CD14-positive monocyte (primary cell): ENCODE measurements at regions of chr2 and their contacts with region 1.

Region 1: DNA sequence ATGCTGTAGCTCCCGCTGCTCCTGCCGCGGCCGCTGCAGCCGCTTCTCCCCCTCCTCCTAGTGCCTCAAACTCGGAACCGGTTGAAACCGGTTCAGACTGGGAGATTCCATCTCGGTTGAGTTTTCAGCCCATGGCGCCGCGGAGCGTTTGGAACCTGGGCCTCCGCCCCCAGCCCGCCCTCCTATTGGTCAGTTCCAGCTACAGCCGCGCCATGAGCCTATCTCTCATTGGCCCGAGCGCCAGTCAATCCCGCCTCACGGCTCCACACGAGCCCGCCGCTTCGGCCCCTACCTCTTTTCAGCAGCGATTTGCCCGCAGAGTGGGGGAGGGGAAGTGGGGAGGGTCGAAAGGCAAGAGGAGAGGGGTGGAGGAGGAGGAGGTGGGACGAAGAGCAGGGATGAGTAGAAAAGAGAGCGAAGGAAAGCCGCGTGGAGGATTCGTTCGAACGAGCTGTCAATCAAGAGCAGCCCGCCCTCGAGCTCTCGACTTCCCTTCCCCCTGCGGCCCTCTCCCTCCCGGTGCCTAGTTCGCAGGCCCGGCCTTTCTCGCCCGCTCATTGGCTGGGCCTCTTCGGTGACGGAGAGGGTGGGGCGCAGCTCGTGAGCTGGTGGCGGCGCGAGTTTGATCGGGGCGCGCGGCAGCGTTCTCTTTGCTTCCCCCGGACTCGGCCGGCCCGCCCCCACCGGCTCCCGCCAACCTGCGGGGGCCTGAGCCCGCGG is at the start of gene XPO1:
- DNase-seq: peak; percentile 98 to 99 (median 98)
- H3K4me3 ChIP-seq: peak within 1 kb of the TSS; percentile 74 to 98 (median 79)
- H3K4me3 Mint-ChIP-seq: peak within 1 kb of the TSS; percentile 93 to 95
- H3K27ac ChIP-seq: peak within 1 kb of the TSS; percentile 93 to 99
- H3K27ac Mint-ChIP-seq: peak within 1 kb of the TSS; percentile 99 to 100 (median 99)
- H3K4me1 ChIP-seq: peaks cover 21 to 32% of the 10 kb centered on the region in 2 donors
- H3K4me1 Mint-ChIP-seq: peaks cover 31% of the 10 kb centered on the region
- H3K27me3 ChIP-seq: no peaks in the 10 kb centered on the region
- H3K27me3 Mint-ChIP-seq: peaks cover 0 to 2% (median 0%) of the 10 kb centered on the region in 3 donors
- CTCF ChIP-seq: no peak
- polyA plus RNA-seq, gene XPO1: 19.0 to 36.4 (median 20.9) TPM

Region 2: DNA sequence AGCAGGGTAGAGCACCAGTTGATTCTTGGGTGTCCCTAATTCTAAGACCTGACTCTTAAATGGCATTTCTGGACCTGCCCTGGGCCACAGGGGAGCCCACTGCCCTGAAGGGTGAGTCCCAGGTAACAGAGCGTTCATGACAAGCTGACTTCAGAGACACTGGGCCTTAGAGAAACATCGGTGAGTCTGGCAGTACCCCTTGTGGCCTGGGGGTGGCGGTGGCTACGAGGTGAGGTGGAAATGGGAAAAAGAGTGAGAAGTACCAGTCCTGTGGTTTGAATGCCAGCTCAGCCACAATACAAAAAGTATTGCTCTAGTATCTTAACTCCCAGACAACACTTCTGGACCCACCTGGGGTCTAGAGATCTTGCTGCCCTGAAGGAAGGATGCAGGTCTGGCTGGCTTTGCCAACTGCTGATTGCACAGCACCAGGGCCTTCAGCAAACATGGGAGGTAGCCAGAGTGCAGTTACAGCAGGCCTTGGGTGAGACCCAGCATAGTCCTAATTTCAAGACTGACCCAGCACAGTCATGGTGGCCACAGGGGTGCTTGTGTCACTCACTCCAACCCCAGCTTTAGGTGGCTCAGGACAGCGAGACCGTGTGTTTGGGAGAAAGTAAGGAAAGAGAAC is 112.0 kb before region 1 on chr2:
- intact Hi-C with region 1: loop called in 1 of 2 experiments (anchors 10 kb)
- DNase-seq: peak; percentile 57 to 71 (median 60)
- H3K4me3 ChIP-seq: no peak overlapping the region
- H3K4me3 Mint-ChIP-seq: no peak overlapping the region
- H3K27ac ChIP-seq: peak overlapping the region; percentile 1 to 68
- H3K27ac Mint-ChIP-seq: peak overlapping the region in 5 of 7 donors; percentile 38 to 88 (median 86)
- H3K4me1 ChIP-seq: peaks cover 23 to 41% of the 10 kb centered on the region in 2 donors
- H3K4me1 Mint-ChIP-seq: peaks cover 59% of the 10 kb centered on the region
- H3K27me3 ChIP-seq: no peaks in the 10 kb centered on the region
- H3K27me3 Mint-ChIP-seq: peaks cover 0 to 1% (median 1%) of the 10 kb centered on the region in 3 donors
- CTCF ChIP-seq: peak; percentile 79

Region 3: GRCh38 chr2:61764035-61764800 is 225.9 kb after region 1 on chr2:
- intact Hi-C with region 1: loop called (anchors 5 to 10 kb)
- DNase-seq: peak; percentile 97 to 98 (median 98)
- H3K4me3 ChIP-seq: peak overlapping the region; percentile 50 to 83 (median 74)
- H3K4me3 Mint-ChIP-seq: peak overlapping the region; percentile 91 to 94
- H3K27ac ChIP-seq: peak overlapping the region; percentile 91 to 98
- H3K27ac Mint-ChIP-seq: peak overlapping the region; percentile 97 to 99 (median 98)
- H3K4me1 ChIP-seq: peaks cover 5 to 11% of the 10 kb centered on the region in 2 donors
- H3K4me1 Mint-ChIP-seq: peaks cover 6% of the 10 kb centered on the region
- H3K27me3 ChIP-seq: no peaks in the 10 kb centered on the region
- H3K27me3 Mint-ChIP-seq: peaks cover 0 to 8% (median 4%) of the 10 kb centered on the region in 3 donors
- CTCF ChIP-seq: no peak

Region 4: GRCh38 chr2:61888267-61889055 is 350.1 kb after region 1 on chr2 and contains the start of gene CCT4:
- intact Hi-C with region 1: loop called in 1 of 2 experiments (anchors 2 kb)
- DNase-seq: peak; percentile 66 to 86 (median 86)
- H3K4me3 ChIP-seq: peak within 1 kb of the TSS; percentile 78 to 94 (median 80)
- H3K4me3 Mint-ChIP-seq: peak within 1 kb of the TSS; percentile 98 to 99
- H3K27ac ChIP-seq: peak within 1 kb of the TSS; percentile 89 to 96
- H3K27ac Mint-ChIP-seq: peak within 1 kb of the TSS; percentile 98 to 100 (median 99)
- H3K4me1 ChIP-seq: peaks cover 12 to 19% of the 10 kb centered on the region in 2 donors
- H3K4me1 Mint-ChIP-seq: peaks cover 17% of the 10 kb centered on the region
- H3K27me3 ChIP-seq: no peaks in the 10 kb centered on the region
- H3K27me3 Mint-ChIP-seq: no peaks in the 10 kb centered on the region
- CTCF ChIP-seq: no peak
- polyA plus RNA-seq, gene CCT4: 26.1 to 78.1 (median 73.1) TPM